ENCODE measurements at regions of chr22 and their contacts with region 1.

Region 1: GRCh38 chr22:30104501-30105156 is 24.4 kb downstream of the HORMAD2 start:
- DNase-seq: no peak
- CTCF ChIP-seq: no peak

Region 2: DNA sequence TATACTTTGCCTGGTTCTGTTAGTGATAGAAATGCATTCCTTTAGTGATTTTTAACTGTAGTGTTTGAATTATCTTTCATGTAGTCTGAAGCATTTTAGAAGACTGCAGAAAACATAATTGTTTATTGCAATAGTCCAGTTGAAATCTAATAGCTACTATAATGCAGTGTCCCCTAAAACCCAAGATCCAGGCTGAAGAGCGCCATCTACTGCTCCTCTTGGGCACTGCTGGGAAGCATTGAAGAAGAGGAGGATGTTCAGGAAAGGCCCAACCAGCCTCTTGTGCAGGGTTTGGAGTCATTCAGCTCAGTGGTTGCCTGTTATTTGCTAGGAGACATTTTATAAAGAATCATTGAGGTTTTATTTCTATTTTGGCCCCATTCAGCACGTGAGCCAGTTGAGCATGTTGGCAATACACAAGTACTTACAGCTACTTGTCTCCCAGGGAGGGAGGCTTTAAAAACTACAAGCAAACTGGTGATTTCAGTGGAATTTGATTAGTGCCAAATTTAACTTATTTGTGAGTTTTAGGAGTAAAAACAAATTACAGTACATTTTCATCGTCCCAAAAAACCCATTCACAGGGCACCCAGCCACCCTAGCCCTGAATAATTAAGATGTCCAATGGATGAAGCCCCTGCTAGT is 99.3 kb before region 1 on chr22:
- in situ Hi-C with region 1: no loop called
- DNase-seq: peak; percentile 57
- CTCF ChIP-seq: peak; percentile 88

Region 3: DNA sequence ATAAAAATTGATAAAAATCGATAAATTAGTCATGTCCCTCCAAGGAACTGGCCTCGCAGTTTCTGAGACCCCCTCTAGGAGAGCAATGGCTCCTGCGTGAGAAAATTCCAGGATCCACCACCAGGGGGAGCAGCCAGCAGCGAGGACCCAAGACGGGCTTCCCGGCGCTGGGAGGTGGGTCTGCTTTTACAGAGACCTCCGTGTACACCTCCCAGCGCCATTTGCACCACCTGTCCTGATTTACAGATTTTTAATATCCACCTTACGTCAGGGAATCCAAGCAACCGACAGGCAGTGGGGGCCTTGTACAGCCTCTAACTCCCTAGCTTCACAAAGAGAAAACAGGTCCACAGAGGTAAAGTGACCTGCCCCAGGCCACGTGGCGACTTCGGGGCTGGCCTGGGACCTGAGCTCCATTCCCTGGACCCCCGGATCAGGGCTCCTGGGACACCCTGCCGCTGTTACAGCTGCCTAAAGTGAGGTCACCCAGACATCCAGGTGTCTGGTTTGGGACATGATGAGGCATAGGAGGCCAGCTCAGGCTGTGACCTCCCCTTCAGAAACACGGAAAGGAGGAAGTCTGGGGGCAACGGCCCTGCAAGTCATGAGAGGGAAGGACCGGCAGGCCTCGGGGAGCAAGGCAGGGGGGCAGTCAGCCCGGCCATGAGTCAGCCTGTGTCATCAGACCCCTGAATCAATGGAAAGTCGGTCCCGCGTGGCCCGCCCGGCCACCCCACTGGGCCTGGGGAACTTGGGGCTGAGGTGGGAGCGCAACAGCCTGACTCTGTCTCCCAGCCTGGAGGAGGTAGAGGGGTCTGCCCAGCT is 158.5 kb after region 1 on chr22:
- in situ Hi-C with region 1: loop called (anchors 10 kb)
- DNase-seq: peak; percentile 81
- CTCF ChIP-seq: peak; percentile 88